Activated naive CD4-positive, alpha-beta T cell treated with anti-CD3 and anti-CD28 coated beads for 36 hours (primary cell): ENCODE measurements at regions of chr4 and their contacts with region 1.

Region 1: DNA sequence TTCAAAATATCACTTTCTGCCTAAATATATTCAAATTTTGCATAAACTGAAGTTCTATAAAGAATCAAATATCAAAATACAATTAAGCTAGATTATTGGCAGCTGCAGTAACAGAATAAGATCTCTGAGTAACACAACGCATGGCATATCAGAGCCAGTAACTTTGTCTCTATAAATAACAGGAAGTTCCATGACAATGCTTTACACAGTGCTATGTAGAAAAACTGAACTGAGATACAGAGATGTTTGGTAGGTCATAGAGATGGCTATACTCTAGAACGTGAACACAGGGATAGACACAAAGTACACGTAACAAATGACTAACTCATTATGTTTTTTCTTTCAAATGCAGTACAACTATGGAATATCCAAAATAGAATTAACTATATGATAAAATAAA is 18.2 kb downstream of the UBE2D3 start:
- DNase-seq: no peak
- H3K4me3 Mint-ChIP-seq: no peak overlapping the region
- H3K27ac Mint-ChIP-seq: peak overlapping the region; percentile 83
- H3K4me1 Mint-ChIP-seq: peaks cover 75% of the 10 kb centered on the region
- H3K27me3 Mint-ChIP-seq: no peaks in the 10 kb centered on the region

Region 2: GRCh38 chr4:102819588-102820365 is 10.6 kb after region 1 on chr4:
- CTCF ChIA-PET with region 1: interaction called, 4 read pairs
- intact Hi-C with region 1: loop called (anchors 1 kb)
- DNase-seq: no peak
- H3K4me3 Mint-ChIP-seq: peak overlapping the region; percentile 66
- H3K27ac Mint-ChIP-seq: peak overlapping the region; percentile 91
- H3K4me1 Mint-ChIP-seq: peaks cover 79% of the 10 kb centered on the region
- H3K27me3 Mint-ChIP-seq: no peaks in the 10 kb centered on the region